Motor neuron (in vitro differentiated cells): ENCODE measurements at regions of chr5 and their contacts with region 1.

Region 1: DNA sequence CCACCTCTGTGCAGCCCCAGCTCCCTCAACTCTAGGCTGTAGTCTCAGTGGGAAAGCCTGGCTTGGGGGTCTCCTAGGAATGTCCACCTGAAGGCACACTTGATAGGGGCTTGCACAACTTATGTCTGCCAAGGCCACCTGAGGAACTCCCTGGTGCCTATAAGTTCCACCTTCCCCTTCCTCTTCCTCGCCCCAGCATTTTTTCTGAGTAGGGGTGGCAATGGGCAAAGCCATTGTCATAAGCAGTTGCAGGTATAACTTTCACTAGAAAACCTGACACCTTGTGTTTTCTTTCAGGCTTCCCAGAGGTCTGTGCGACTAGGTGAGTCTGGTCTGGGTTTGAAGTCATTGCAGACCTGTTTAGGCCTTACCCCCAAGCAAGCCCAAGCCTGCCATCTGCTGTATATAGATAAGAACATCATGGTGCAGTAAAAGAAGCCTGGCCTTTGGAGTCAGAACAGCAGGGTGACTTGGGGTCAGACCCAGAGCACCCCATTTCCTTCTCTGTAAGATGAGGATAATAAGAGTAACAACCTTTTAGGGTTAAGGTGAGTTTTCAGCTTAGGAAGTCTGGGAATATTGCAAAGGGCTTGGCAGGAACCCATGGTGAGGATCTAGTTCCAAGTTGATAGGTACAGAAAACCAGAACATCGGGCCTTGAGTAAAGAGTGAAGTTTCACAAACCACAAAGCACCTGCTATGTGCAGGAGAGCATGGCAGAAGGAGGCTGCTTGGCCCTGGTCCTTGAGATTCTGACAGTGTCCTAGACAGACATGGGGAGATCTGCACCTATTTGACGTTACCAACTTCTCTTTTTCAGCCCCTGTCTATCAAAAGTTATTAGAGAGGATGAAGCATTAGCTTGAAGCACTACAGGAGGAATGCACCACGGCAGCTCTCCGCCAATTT is 33.8 kb downstream of the TGFBI start:
- ATAC-seq: no peak
- H3K4me3 ChIP-seq: no peak overlapping the region
- H3K27ac ChIP-seq: no peak overlapping the region
- H3K4me1 ChIP-seq: peaks cover 0 to 7% of the 10 kb centered on the region in 2 donors

Region 2: GRCh38 chr5:135887351-135887864 is 175.2 kb before region 1 on chr5:
- in situ Hi-C with region 1: loop called in 1 of 9 experiments (anchors 25 kb)
- ATAC-seq: peak; percentile 76 to 96 (median 87)
- H3K4me3 ChIP-seq: no peak overlapping the region
- H3K27ac ChIP-seq: no peak overlapping the region
- H3K4me1 ChIP-seq: no peaks in the 10 kb centered on the region

Region 3: DNA sequence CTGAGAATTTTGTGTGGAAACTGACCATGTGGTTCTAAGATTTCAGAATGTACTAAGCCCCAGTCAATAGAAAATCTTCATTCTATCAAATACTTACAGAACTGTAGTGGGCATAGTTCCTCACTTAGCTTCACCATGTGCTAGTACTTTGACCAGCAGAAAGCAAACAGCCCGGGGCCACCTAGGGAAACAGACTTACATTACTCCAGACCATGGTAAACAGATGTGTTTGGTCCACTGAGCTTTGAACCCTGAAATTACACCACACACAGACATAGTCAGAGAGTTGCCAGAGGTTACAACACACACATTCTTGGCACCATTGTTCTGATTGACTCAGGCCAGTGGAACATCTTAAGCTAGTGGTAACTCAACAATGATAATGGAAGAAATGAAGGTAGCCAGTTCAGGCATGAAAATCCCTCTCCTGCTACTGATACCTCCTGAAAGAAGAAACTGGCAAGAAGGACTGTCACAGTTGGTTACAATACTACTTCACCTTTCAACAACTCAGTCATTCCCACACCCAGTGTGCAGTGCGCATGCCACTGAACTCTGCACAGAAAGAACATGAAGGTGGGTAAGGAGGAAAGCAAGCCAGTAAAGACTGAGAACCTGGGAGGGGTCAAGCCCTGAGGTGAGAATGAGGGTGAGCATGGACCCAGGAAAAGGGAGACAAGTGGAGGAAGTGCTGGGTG is 89.1 kb before region 1 on chr5:
- in situ Hi-C with region 1: loop called in 1 of 9 experiments (anchors 25 kb)
- ATAC-seq: peak in 4 of 8 experiments; percentile 11 to 67 (median 44)
- H3K4me3 ChIP-seq: no peak overlapping the region
- H3K27ac ChIP-seq: no peak overlapping the region
- H3K4me1 ChIP-seq: peaks cover 0 to 9% of the 10 kb centered on the region in 2 donors